Calu3 (cell line): ENCODE measurements at regions of chr2 and their contacts with region 1.

Region 1: DNA sequence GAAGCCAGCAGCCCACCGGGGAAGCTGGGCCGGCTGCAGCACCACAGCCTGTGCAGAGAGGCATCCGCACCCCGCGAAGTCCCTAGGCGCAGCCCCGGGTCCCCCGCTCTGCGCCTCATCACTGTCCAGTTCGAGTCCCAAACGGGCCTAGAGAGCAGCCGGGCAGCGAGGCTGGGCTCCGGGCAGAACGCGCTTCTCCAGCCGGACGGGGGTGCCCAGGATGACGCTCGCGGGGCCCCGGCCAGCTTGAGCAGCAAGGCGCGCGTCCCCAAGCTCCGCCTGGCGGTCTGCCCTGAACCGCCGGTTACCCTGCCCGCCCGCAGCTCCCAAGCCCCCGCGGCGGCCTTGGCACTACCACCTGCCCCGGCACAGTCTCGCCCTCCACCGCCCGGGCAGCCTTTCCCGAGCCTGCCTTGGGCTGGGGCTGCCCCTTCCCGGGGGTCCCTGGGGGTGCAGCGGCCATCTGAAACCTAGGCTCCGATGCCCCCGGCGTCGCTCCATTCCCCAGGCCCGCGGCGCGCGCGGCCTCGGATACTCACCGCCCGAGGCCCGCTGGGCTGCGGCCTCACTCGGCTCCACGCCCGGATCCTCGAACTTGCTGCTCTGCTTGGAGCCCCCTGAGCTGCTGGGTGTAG is 591 bp downstream of the SLC16A14 start:
- DNase-seq: peak; percentile 78
- H3K4me3 Mint-ChIP-seq: peak overlapping the region; percentile 71
- H3K27ac Mint-ChIP-seq: peak overlapping the region; percentile 26
- H3K4me1 Mint-ChIP-seq: peaks cover 12% of the 10 kb centered on the region
- H3K27me3 Mint-ChIP-seq: no peaks in the 10 kb centered on the region
- CTCF ChIP-seq: no peak

Region 2: DNA sequence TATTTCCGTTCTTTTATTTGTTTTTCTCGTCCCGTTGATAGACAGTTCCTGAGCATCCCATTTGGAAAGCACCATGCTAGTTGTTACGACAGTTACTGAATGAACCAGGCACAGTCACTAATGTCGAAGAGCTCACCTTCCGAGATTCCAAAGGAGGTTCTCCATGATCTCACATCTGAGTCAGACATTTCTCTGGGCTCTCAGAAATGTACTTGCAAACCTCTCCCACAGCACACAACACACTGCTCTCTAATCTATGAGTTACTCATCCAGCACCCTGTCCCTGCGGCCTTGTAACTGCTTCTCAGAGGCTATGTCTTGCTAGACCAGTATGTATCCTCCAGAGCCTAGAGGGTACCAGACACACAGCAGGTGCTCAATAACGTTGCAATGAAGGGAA is 528.5 kb before region 1 on chr2:
- CTCF ChIA-PET with region 1: no interaction called
- intact Hi-C with region 1: no loop called
- DNase-seq: no peak
- H3K4me3 Mint-ChIP-seq: no peak overlapping the region
- H3K27ac Mint-ChIP-seq: no peak overlapping the region
- H3K4me1 Mint-ChIP-seq: no peaks in the 10 kb centered on the region
- H3K27me3 Mint-ChIP-seq: no peaks in the 10 kb centered on the region
- CTCF ChIP-seq: no peak

Region 3: DNA sequence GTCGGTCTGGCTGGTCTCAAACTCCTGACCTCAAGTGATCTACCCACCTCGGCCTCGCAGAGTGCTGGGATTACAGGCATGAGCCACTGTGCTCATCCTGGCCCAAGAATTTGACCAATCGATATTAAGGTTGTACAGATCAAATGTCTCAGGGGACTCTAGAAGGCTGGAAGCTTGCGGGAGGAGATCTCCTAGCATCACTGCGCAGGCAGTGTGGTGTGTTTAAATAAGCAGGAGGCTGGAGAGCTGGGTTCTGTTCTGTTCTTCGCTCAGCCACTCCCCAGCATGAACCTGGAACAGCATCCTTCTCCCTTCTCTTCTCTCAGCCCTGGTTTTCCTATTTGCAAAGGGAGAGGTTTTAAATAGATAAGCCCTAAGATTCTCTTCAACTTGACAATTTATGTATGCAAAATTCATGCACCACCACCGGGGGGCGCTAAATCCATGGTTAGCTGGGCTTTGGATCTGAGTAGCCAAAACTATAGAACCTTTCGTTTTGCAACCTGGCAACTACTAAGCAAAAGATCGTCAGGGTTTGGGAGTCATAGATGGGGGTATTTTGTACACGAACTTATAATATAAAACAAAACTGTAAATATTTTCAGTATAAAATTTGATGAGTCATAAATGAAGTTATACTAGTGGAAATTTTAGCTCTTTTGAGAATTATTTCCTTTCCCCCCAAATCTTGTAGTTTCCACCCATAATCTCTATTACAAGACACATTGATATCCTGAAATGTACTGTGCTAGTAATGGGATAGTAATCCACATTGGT is 60.0 kb before region 1 on chr2:
- CTCF ChIA-PET with region 1: interaction called, 15 read pairs
- intact Hi-C with region 1: loop called (anchors 1 kb)
- DNase-seq: peak; percentile 85
- H3K4me3 Mint-ChIP-seq: no peak overlapping the region
- H3K27ac Mint-ChIP-seq: no peak overlapping the region
- H3K4me1 Mint-ChIP-seq: peaks cover 18% of the 10 kb centered on the region
- H3K27me3 Mint-ChIP-seq: no peaks in the 10 kb centered on the region
- CTCF ChIP-seq: peak; percentile 86

Region 4: DNA sequence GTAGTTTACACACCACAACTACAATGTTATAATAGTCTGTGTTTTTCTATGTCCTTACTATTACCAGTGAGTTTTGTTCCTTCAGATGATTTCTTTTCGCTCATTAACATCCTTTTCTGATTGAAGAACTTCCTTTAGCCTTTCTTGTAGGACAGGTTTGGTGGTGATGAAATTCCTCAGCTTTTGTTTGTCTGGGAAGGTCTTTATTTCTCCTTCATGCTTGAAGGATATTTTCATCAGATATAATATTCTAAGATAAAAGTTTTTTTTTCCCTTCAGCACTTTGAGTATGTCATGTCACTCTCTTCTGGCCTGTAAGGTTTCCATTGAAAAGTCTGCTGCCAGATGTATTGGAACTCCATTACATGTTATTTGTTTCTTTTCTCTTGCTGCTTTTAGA is 38.7 kb after region 1 on chr2:
- CTCF ChIA-PET with region 1: no interaction called
- intact Hi-C with region 1: no loop called
- DNase-seq: no peak
- H3K4me3 Mint-ChIP-seq: no peak overlapping the region
- H3K27ac Mint-ChIP-seq: peak overlapping the region; percentile 33
- H3K4me1 Mint-ChIP-seq: peaks cover 12% of the 10 kb centered on the region
- H3K27me3 Mint-ChIP-seq: no peaks in the 10 kb centered on the region
- CTCF ChIP-seq: no peak

Region 5: GRCh38 chr2:230160112-230160660 is 92.1 kb after region 1 on chr2:
- CTCF ChIA-PET with region 1: interaction called, 33 read pairs
- intact Hi-C with region 1: loop called (anchors 2 kb)
- DNase-seq: peak; percentile 54
- H3K4me3 Mint-ChIP-seq: no peak overlapping the region
- H3K27ac Mint-ChIP-seq: no peak overlapping the region
- H3K4me1 Mint-ChIP-seq: no peaks in the 10 kb centered on the region
- H3K27me3 Mint-ChIP-seq: no peaks in the 10 kb centered on the region
- CTCF ChIP-seq: peak; percentile 77

Region 6: GRCh38 chr2:230179907-230180306 is 111.8 kb after region 1 on chr2:
- CTCF ChIA-PET with region 1: interaction called, 13 read pairs
- intact Hi-C with region 1: no loop called
- DNase-seq: no peak
- H3K4me3 Mint-ChIP-seq: no peak overlapping the region
- H3K27ac Mint-ChIP-seq: no peak overlapping the region
- H3K4me1 Mint-ChIP-seq: no peaks in the 10 kb centered on the region
- H3K27me3 Mint-ChIP-seq: no peaks in the 10 kb centered on the region
- CTCF ChIP-seq: no peak

Region 7: GRCh38 chr2:230411570-230412370 is 343.6 kb after region 1 on chr2:
- CTCF ChIA-PET with region 1: no interaction called
- intact Hi-C with region 1: loop called (anchors 10 kb)
- DNase-seq: peak; percentile 68
- H3K4me3 Mint-ChIP-seq: peak overlapping the region; percentile 91
- H3K27ac Mint-ChIP-seq: peak overlapping the region; percentile 87
- H3K4me1 Mint-ChIP-seq: peaks cover 38% of the 10 kb centered on the region
- H3K27me3 Mint-ChIP-seq: no peaks in the 10 kb centered on the region
- CTCF ChIP-seq: no peak

Region 8: GRCh38 chr2:231170055-231170454 is 1101.9 kb after region 1 on chr2:
- CTCF ChIA-PET with region 1: no interaction called
- intact Hi-C with region 1: no loop called
- DNase-seq: no peak
- H3K4me3 Mint-ChIP-seq: no peak overlapping the region
- H3K27ac Mint-ChIP-seq: no peak overlapping the region
- H3K4me1 Mint-ChIP-seq: no peaks in the 10 kb centered on the region
- H3K27me3 Mint-ChIP-seq: no peaks in the 10 kb centered on the region
- CTCF ChIP-seq: no peak